ENCODE measurements at regions of chr2 and their contacts with region 1.

Region 1: DNA sequence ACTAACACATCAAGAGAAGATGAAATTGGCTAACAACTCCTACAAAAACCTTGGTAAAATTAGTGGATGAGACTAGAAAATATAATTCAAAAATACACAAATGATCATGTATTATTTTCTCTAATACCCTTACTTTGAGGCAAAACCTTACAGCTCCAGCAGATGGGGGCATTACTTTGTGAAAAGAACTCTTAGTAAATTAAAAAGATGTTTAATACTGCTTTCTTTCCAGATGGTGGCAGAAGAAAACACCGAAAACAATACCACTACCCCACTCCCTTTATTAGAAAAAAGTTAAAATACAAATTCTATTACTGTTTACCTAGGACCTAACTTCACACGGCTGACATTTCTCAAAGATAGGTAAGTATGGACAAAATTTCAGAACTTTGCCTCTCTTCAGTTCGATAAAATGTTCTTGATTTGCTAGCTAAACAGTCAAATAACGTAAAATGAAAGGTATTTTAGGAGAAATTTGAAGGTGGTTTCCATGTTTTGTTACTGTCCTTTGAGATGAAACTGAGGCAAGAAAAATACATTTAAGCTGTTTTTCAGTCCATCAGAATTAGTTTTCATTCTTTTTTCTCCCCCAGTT is 30.6 kb downstream of the ORC4 start:
- DNase-seq: no peak
- H3K4me3 ChIP-seq: no peak overlapping the region
- H3K27ac ChIP-seq: no peak overlapping the region
- H3K4me1 ChIP-seq: no peaks in the 10 kb centered on the region
- H3K27me3 ChIP-seq: no peaks in the 10 kb centered on the region
- CTCF ChIP-seq: peak; percentile 67

Region 2: GRCh38 chr2:146227152-146228019 is 1762.5 kb before region 1 on chr2:
- CTCF ChIA-PET with region 1: no interaction called
- POLR2A ChIA-PET with region 1: no interaction called
- intact Hi-C with region 1: no loop called
- DNase-seq: no peak
- H3K4me3 ChIP-seq: no peak overlapping the region
- H3K27ac ChIP-seq: no peak overlapping the region
- H3K4me1 ChIP-seq: no peaks in the 10 kb centered on the region
- H3K27me3 ChIP-seq: no peaks in the 10 kb centered on the region
- CTCF ChIP-seq: no peak

Region 3: DNA sequence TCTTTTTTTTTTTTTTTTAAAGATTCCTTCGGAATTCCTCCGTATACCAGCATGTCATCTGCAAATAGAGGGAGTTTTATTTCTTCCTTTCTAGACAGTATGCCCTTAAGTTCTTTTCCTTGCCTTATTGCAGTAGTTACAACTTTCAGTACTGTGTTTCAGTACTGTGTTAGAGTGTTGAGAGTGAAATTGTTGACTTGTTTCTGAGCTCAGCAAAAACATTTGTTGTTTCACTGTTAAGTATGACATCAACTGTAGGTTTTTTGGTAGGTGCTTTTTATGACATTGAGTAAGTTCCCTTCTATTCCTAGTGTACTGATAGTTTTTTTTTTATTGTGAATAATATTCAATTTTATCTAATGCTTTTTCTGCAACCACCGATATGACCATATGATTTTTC is 101.2 kb before region 1 on chr2:
- CTCF ChIA-PET with region 1: no interaction called
- POLR2A ChIA-PET with region 1: no interaction called
- intact Hi-C with region 1: no loop called
- DNase-seq: no peak
- H3K4me3 ChIP-seq: no peak overlapping the region
- H3K27ac ChIP-seq: no peak overlapping the region
- H3K4me1 ChIP-seq: no peaks in the 10 kb centered on the region
- H3K27me3 ChIP-seq: no peaks in the 10 kb centered on the region
- CTCF ChIP-seq: no peak

Region 4: DNA sequence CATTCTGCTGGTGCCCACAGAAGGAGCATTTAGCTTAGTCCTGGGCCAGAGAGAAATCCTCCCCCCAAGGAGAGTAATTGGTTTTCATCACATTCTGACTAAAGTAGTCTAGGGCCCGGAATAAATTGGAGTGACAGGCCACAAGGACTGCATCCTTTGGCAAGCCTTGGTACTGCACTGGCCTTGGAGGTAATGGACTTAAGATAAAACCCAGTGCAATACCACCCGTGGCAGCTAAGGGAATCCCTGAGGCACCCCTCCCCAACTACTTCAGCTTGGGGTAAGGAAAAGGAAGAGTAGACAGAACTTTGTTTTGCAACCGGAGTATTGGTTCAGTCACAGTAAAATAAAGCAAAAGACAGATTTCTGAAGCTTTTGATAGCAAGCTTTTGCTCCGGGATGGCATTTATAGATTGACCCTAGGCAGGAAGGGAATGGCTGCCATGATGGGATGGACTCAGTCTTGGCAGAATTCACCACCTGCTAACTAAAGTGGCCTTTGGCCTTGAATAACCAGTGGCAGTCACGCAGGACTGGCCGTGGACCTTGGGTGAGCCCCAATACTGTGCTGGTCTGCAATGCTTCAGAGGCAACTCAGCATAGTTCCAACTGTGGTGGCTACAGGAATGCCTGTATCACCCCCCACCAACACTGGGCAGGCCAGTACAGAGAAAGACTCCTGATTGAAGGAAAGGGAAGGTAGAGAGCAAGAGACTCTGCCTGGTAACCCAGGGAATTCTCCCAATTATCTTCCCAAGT is 16.5 kb after region 1 on chr2:
- CTCF ChIA-PET with region 1: no interaction called
- POLR2A ChIA-PET with region 1: interaction called, 13 read pairs
- intact Hi-C with region 1: no loop called
- DNase-seq: no peak
- H3K4me3 ChIP-seq: no peak overlapping the region
- H3K27ac ChIP-seq: no peak overlapping the region
- H3K4me1 ChIP-seq: no peaks in the 10 kb centered on the region
- H3K27me3 ChIP-seq: no peaks in the 10 kb centered on the region
- CTCF ChIP-seq: no peak

Region 5: GRCh38 chr2:148509288-148509902 is 519.5 kb after region 1 on chr2:
- CTCF ChIA-PET with region 1: interaction called, 6 read pairs
- POLR2A ChIA-PET with region 1: no interaction called
- intact Hi-C with region 1: loop called (anchors 1 kb)
- DNase-seq: peak; percentile 63 to 80
- H3K4me3 ChIP-seq: peak overlapping the region; percentile 38; the same call in 1 of the 2 replicates
- H3K27ac ChIP-seq: no peak overlapping the region
- H3K4me1 ChIP-seq: peaks cover 9% of the 10 kb centered on the region
- H3K27me3 ChIP-seq: no peaks in the 10 kb centered on the region
- CTCF ChIP-seq: peak; percentile 79

Region 6: GRCh38 chr2:148989882-148990493 is 1000.1 kb after region 1 on chr2:
- CTCF ChIA-PET with region 1: interaction called, 4 read pairs
- POLR2A ChIA-PET with region 1: no interaction called
- intact Hi-C with region 1: loop called (anchors 1 kb)
- DNase-seq: peak; percentile 36 to 56
- H3K4me3 ChIP-seq: no peak overlapping the region
- H3K27ac ChIP-seq: no peak overlapping the region
- H3K4me1 ChIP-seq: no peaks in the 10 kb centered on the region
- H3K27me3 ChIP-seq: no peaks in the 10 kb centered on the region
- CTCF ChIP-seq: peak; percentile 73

Region 7: GRCh38 chr2:149040451-149040850 is 1050.5 kb after region 1 on chr2:
- CTCF ChIA-PET with region 1: no interaction called
- POLR2A ChIA-PET with region 1: no interaction called
- intact Hi-C with region 1: loop called (anchors 5 kb)
- DNase-seq: no peak
- H3K4me3 ChIP-seq: no peak overlapping the region
- H3K27ac ChIP-seq: peak overlapping the region; percentile 32; the same call in 1 of the 2 replicates
- H3K4me1 ChIP-seq: peaks cover 12% of the 10 kb centered on the region
- H3K27me3 ChIP-seq: no peaks in the 10 kb centered on the region
- CTCF ChIP-seq: peak; percentile 55

Measured in PC-9 (cell line).